Prostate gland (tissue), 2 donors: ENCODE measurements at regions of chr12 and their contacts with region 1.

Region 1: DNA sequence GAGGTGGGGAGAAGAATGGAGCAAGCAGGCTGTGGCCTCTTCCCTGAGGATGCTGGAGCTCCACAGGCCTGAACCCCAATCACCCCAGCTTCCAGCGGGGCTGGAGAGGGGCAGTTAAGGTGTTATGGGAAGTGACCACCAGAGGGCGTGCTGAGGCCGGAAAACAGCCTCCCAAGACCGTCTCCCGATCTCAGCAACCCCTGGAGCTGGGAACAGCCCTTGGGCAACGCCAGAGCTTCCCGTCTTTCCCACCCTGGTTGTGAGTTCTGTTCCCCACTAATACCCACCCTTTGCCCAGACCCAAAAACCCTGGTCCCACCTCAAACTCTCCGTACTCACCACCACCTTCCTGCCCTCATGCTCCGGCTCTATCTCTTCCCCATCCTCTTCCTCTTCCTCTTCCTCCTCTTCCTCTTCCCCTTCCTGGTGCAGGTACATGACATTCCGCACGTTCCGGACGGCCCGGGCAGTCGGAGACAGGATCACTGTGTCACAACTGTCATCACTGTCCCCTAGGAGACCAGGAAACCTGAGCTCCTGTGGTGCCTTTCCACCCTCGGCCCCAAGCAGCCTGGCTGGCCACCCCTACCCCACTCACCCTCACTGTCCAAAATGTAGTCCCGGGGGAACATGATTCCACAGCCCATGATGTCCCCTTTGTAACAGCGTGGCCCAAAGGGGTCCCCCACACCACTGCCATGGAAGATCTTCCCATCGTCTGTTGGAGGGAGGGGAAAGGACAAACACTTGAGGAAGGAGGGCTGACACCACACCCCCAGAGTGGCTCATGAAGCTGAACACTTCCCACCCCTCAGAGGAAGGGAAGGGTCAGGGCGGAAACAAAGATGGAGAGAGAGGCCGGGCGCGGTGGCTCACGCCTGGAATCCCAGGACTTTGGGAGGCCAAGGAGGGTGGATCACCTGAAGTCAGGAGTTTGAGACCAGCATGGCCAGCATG is 12.9 kb downstream of the SPRYD3 start:
- DNase-seq: no peak
- H3K4me3 ChIP-seq: no peak overlapping the region
- H3K27ac ChIP-seq: peak overlapping the region; percentile 58 to 70
- H3K4me1 ChIP-seq: peaks cover 8% of the 10 kb centered on the region
- H3K27me3 ChIP-seq: no peaks in the 10 kb centered on the region
- CTCF ChIP-seq: peak; percentile 80 to 95 (median 93)
- POLR2A ChIP-seq: no peak

Region 2: GRCh38 chr12:53098982-53099651 is 32.9 kb after region 1 on chr12:
- intact Hi-C with region 1: loop called (anchors 1 kb)
- DNase-seq: peak; percentile 86
- H3K4me3 ChIP-seq: peak overlapping the region; percentile 12 to 48
- H3K27ac ChIP-seq: peak overlapping the region; percentile 71 to 86
- H3K4me1 ChIP-seq: peaks cover 5% of the 10 kb centered on the region
- H3K27me3 ChIP-seq: no peaks in the 10 kb centered on the region
- CTCF ChIP-seq: peak; percentile 91 to 97 (median 95)
- POLR2A ChIP-seq: peak; percentile 14

Region 3: GRCh38 chr12:53195516-53196420 is 129.5 kb after region 1 on chr12:
- intact Hi-C with region 1: loop called (anchors 2 kb)
- DNase-seq: no peak
- H3K4me3 ChIP-seq: no peak overlapping the region
- H3K27ac ChIP-seq: no peak overlapping the region
- H3K4me1 ChIP-seq: no peaks in the 10 kb centered on the region
- H3K27me3 ChIP-seq: no peaks in the 10 kb centered on the region
- CTCF ChIP-seq: no peak
- POLR2A ChIP-seq: no peak